K562 (cell line): ENCODE measurements at regions of chr19 and their contacts with region 1.

Region 1: GRCh38 chr19:50804420-50805272 is 14.4 kb downstream of the ACP4 start:
- DNase-seq: peak; percentile 95 to 99 (median 97)
- ATAC-seq: peak; percentile 96
- H3K4me3 ChIP-seq: peak overlapping the region; percentile 99
- H3K27ac ChIP-seq: peak overlapping the region; percentile 100
- H3K4me1 ChIP-seq: peaks cover 14 to 24% of the 10 kb centered on the region in 2 experiments; a peak in 4 of 5 replicates
- H3K27me3 ChIP-seq: no peaks in the 10 kb centered on the region
- CTCF ChIP-seq: peak in 1 of 3 experiments; percentile 4; a peak in 1 of 6 replicates
- EP300 ChIP-seq: peak; percentile 21; the same call in 1 of the 2 replicates
- POLR2A ChIP-seq: peak; percentile 99
- RAD21 ChIP-seq: 0 out of 4 replicates have a peak, but pooled peaks of 1 of the 2 experiments have one; percentile 6

Region 2: GRCh38 chr19:50724522-50725217 is 80.0 kb before region 1 on chr19:
- CTCF ChIA-PET with region 1: no interaction called
- POLR2A ChIA-PET with region 1: interaction called, 14 read pairs
- in situ Hi-C with region 1: no loop called
- intact Hi-C with region 1: no loop called
- DNase-seq: peak; percentile 98 to 100 (median 99)
- ATAC-seq: peak; percentile 86
- H3K4me3 ChIP-seq: peak overlapping the region; percentile 59
- H3K27ac ChIP-seq: peak overlapping the region; percentile 80
- H3K4me1 ChIP-seq: peaks cover 33 to 67% of the 10 kb centered on the region in 2 experiments; a peak in 4 of 5 replicates
- H3K27me3 ChIP-seq: no peaks in the 10 kb centered on the region
- CTCF ChIP-seq: peak; percentile 87 to 96 (median 91)
- EP300 ChIP-seq: no peak
- POLR2A ChIP-seq: peak; percentile 86
- RAD21 ChIP-seq: peak; percentile 82 to 83

Region 3: GRCh38 chr19:50817941-50818858 is 13.6 kb after region 1 on chr19:
- CTCF ChIA-PET with region 1: no interaction called
- POLR2A ChIA-PET with region 1: interaction called, 70 read pairs
- in situ Hi-C with region 1: no loop called
- intact Hi-C with region 1: no loop called
- DNase-seq: peak; percentile 94 to 97 (median 96)
- ATAC-seq: peak; percentile 96
- H3K4me3 ChIP-seq: peak overlapping the region; percentile 57
- H3K27ac ChIP-seq: no peak overlapping the region; the same call in 2 of the 3 replicates
- H3K4me1 ChIP-seq: peaks cover 44 to 64% of the 10 kb centered on the region in 2 experiments
- H3K27me3 ChIP-seq: no peaks in the 10 kb centered on the region; a peak in 1 of 5 replicates
- CTCF ChIP-seq: no peak
- EP300 ChIP-seq: no peak
- POLR2A ChIP-seq: 0 out of 2 replicates have a peak, but pooled peaks have one; percentile 32
- RAD21 ChIP-seq: no peak

Region 4: DNA sequence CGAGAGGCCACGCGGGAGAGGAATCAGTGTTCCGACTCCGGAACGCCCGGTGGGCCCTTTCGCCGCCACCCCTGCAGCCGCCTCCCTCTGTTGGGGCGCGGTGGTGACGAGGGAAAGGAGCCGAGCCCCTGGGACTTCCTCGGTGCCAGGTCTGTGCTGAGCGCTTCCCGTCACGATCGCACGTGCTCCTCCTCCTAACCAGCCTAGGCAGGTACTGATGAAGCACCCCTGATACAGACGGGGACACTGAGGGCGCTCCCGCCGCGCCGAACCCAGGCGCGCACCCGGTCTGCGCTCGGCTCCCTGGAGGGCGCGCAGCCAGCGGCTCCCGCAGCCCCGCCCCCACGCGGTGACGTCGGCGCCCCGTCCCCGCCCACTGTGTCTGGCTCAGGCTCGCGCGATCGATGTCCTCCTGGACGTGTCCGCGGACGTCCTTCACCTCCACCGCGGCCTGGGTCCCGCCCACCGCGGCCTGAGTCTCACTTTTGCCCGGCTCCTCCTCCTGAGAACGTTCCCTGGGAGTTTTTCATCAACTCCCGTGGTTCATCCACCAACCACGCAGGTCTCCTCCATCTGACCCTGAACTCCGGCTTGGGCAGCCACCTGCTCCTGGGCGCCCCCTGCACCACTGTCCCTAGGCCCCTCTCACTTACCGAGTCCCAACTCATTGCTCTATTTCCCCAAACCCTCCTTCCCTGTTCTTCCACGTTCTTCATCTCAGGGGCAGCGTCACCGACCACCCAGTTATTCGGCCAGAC is 31.3 kb after region 1 on chr19:
- CTCF ChIA-PET with region 1: interaction called, 5 read pairs
- POLR2A ChIA-PET with region 1: interaction called, 6 read pairs
- in situ Hi-C with region 1: no loop called
- intact Hi-C with region 1: loop called (anchors 5 kb)
- DNase-seq: peak; percentile 91 to 96 (median 94)
- ATAC-seq: peak; percentile 99
- H3K4me3 ChIP-seq: peak overlapping the region; percentile 52
- H3K27ac ChIP-seq: peak overlapping the region; percentile 67
- H3K4me1 ChIP-seq: peaks cover 14 to 16% of the 10 kb centered on the region in 2 experiments; a peak in 4 of 5 replicates
- H3K27me3 ChIP-seq: 0 out of 5 replicates have a peak, but pooled peaks cover 0 to 3% of the 10 kb centered on the region in 2 experiments
- CTCF ChIP-seq: 0 out of 6 replicates have a peak, but pooled peaks of 1 of the 3 experiments have one; percentile 2
- EP300 ChIP-seq: no peak
- POLR2A ChIP-seq: peak; percentile 83
- RAD21 ChIP-seq: no peak

Region 5: GRCh38 chr19:51002542-51003171 is 198.0 kb after region 1 on chr19:
- CTCF ChIA-PET with region 1: no interaction called
- POLR2A ChIA-PET with region 1: interaction called, 11 read pairs
- in situ Hi-C with region 1: no loop called
- intact Hi-C with region 1: no loop called
- DNase-seq: peak; percentile 97 to 99 (median 98)
- ATAC-seq: peak; percentile 98
- H3K4me3 ChIP-seq: peak overlapping the region; percentile 26
- H3K27ac ChIP-seq: peak overlapping the region; percentile 53; the same call in 1 of the 3 replicates
- H3K4me1 ChIP-seq: peaks cover 19 to 32% of the 10 kb centered on the region in 2 experiments; a peak in 4 of 5 replicates
- H3K27me3 ChIP-seq: peaks cover 0 to 9% of the 10 kb centered on the region in 2 experiments; a peak in 2 of 5 replicates
- CTCF ChIP-seq: no peak
- EP300 ChIP-seq: no peak
- POLR2A ChIP-seq: peak; percentile 60
- RAD21 ChIP-seq: no peak